HepG2 (cell line): ENCODE measurements at regions of chr13 and their contacts with region 1.

Region 1: GRCh38 chr13:113187263-113187669 is 21.2 kb downstream of the PCID2 start:
- DNase-seq: peak; percentile 83
- ATAC-seq: no peak
- H3K4me3 ChIP-seq: no peak overlapping the region
- H3K27ac ChIP-seq: peak overlapping the region; percentile 51
- H3K4me1 ChIP-seq: peaks cover 30% of the 10 kb centered on the region
- H3K27me3 ChIP-seq: no peaks in the 10 kb centered on the region
- CTCF ChIP-seq: no peak
- EP300 ChIP-seq: no peak; a peak in 1 of 4 replicates
- POLR2A ChIP-seq: no peak
- RAD21 ChIP-seq: no peak

Region 2: GRCh38 chr13:113208424-113209335 is 21.4 kb after region 1 on chr13 and contains the start of gene PCID2:
- CTCF ChIA-PET with region 1: no interaction called
- POLR2A ChIA-PET with region 1: interaction called, 16 read pairs
- in situ Hi-C with region 1: no loop called
- intact Hi-C with region 1: no loop called
- DNase-seq: peak; percentile 82
- ATAC-seq: peak; percentile 86
- H3K4me3 ChIP-seq: peak within 1 kb of the TSS; percentile 83 to 96 (median 85)
- H3K27ac ChIP-seq: peak within 1 kb of the TSS; percentile 92
- H3K4me1 ChIP-seq: peaks cover 71% of the 10 kb centered on the region
- H3K27me3 ChIP-seq: no peaks in the 10 kb centered on the region
- CTCF ChIP-seq: peak; percentile 52
- EP300 ChIP-seq: peak; percentile 29 to 59; a peak in 1 of 4 replicates
- POLR2A ChIP-seq: peak in 1 of 2 experiments; percentile 83; a peak in 2 of 4 replicates
- RAD21 ChIP-seq: peak; percentile 54; the same call in 1 of the 2 replicates
- total RNA-seq, gene PCID2: 65.0 and 76.4 TPM in 2 replicates

Region 3: DNA sequence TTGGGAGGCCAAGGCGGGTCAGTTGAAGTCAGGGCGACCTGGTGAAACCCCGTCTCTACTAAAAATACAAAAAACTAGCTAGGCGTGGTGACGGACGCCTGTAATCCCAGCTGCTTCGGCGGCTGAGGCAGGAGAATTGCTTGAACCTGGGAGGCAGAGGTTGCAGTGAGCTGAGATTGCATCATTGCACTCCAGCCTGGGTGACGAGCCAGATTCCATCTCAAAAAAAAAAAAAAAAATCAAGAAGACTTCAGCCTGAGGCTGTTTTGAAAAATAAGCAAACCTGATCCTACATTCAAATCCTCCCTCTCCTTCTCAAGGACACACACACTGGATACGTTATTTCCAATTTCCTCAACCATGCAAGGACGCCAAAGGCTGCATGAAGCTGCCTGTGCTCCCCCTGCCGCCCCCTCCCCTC is 240.8 kb after region 1 on chr13:
- CTCF ChIA-PET with region 1: no interaction called
- POLR2A ChIA-PET with region 1: no interaction called
- in situ Hi-C with region 1: no loop called
- intact Hi-C with region 1: no loop called
- DNase-seq: no peak
- ATAC-seq: no peak
- H3K4me3 ChIP-seq: no peak overlapping the region; a peak in 1 of 6 replicates
- H3K27ac ChIP-seq: no peak overlapping the region
- H3K4me1 ChIP-seq: peaks cover 21% of the 10 kb centered on the region
- H3K27me3 ChIP-seq: peaks cover 4 to 54% of the 10 kb centered on the region in 2 experiments; a peak in 4 of 5 replicates
- CTCF ChIP-seq: no peak
- EP300 ChIP-seq: no peak
- POLR2A ChIP-seq: no peak
- RAD21 ChIP-seq: no peak